Activated CD4-positive, alpha-beta T cell treated with anti-CD3 and anti-CD28 coated beads for 36 hours (primary cell): ENCODE measurements at regions of chr10 and their contacts with region 1.

Region 1: DNA sequence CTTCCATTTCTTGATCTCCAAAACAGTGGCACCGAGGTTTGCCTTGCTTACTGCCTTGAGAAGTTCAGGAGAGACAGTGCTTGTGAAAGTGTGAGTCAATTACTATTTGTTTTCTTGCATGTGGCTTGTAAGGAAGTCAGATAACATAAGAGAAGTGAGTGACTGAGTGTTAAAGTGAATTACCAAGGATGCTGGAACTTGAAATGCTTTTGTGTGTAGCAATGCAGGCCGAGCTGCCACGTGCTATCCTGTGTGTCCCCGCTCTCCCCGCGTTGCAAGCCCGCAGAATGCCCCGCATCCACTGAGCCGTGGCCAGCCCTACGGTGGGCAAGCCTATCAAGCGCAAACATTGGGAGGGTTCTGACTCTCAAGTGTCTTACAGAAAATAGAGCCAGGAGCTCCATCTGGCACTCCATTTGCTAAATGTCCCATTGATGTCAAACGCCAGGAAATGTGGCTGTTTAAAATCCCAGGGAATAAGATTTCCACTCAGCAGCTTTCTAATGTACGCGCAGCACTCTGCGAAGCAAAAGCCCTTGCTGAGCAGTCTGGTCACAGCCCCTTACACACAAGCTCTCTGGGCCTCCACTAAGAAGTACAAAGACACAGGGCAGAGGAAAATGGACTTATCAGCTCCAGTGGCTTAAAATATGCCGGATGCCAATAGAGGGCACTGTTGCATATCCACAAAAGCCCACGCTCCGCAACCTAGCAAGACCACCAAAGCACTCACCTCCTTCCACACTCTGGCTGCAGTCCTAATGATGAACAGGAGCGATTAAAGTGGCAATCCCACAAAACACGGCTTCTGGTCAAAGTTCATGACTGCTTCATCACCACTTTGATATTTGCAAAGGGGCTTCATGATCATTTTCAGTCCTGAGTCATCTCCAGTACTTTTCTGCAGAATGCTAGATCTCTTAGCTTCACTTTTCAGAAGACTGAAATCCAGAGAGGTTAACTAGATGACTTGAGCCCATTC is 158.0 kb upstream of the ITGB1 start:
- DNase-seq: no peak
- ATAC-seq: peak; percentile 30
- H3K4me3 Mint-ChIP-seq: no peak overlapping the region
- H3K27ac Mint-ChIP-seq: peak overlapping the region; percentile 62
- H3K4me1 Mint-ChIP-seq: peaks cover 86% of the 10 kb centered on the region
- H3K27me3 Mint-ChIP-seq: no peaks in the 10 kb centered on the region

Region 2: DNA sequence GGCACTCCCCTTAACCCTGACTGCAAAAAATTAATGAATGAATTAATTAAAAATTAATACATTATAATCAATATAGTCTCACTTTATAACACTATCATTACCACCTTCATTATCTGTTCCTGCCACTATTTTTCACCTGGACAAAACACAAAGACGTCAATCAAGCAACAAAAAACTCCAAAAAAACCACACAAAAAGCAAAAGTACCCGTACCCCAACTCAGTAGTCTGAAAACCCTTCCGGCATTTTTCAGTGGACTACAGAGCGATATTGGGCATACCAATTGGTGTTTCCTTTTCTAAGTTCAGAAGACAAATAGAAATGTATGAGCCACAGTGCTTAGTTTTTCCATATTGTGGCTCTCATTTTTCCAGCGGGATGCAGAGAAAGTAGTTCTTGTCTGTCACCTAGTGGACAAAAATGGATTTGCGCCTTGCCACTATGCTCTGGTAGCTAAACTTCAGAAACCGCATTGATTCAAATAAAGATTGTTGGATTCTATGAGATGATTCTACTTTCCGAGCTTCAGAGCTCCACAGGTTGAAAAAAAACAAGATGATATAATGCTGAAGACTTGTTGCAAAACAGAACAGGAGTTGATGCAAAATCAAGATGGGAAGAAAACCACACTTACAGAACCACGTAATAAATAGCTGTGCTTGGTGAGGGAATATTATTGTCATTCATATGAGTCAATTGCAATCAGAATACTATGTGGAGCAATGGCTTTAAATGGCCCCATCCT is 107.4 kb before region 1 on chr10:
- CTCF ChIA-PET with region 1: interaction called, 5 read pairs
- POLR2A ChIA-PET with region 1: interaction called, 3 read pairs
- intact Hi-C with region 1: loop called in 1 of 2 experiments (anchors 5 kb)
- DNase-seq: peak; percentile 80
- ATAC-seq: peak; percentile 61
- H3K4me3 Mint-ChIP-seq: peak overlapping the region; percentile 40
- H3K27ac Mint-ChIP-seq: peak overlapping the region; percentile 67
- H3K4me1 Mint-ChIP-seq: peaks cover 41% of the 10 kb centered on the region
- H3K27me3 Mint-ChIP-seq: peaks cover 7% of the 10 kb centered on the region

Region 3: GRCh38 chr10:33094263-33095051 is 21.6 kb before region 1 on chr10:
- CTCF ChIA-PET with region 1: no interaction called
- POLR2A ChIA-PET with region 1: no interaction called
- intact Hi-C with region 1: no loop called
- DNase-seq: peak; percentile 11
- ATAC-seq: peak; percentile 39
- H3K4me3 Mint-ChIP-seq: no peak overlapping the region
- H3K27ac Mint-ChIP-seq: peak overlapping the region; percentile 16
- H3K4me1 Mint-ChIP-seq: peaks cover 22% of the 10 kb centered on the region
- H3K27me3 Mint-ChIP-seq: no peaks in the 10 kb centered on the region

Region 4: DNA sequence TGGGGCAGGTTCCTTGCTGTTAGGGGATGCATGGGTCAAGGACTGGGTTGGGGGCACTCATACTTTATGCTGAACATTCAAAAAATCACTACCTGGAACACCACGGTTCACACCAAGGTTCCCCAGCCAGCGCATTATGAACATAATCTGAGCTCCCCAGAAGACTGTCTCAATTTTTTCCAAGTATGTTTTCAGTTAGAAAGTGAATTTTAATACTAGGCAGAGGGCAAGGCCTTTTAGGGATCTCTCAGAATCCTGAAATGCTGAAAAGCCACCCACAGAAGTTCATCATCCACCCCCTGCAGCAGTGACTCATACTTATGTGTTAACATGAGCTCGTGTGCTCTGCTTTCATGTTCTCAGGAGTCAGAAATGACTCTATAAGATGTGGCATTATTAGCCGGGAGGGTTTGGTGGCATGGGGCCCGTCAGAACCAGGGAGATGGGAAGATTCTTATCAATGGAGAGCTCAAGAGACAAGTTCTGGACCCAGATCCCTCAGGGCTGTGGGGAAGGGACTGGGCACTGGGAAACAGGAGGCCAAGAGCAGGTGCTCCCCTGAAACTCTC is 27.2 kb after region 1 on chr10:
- CTCF ChIA-PET with region 1: interaction called, 3 read pairs
- POLR2A ChIA-PET with region 1: interaction called, 10 read pairs
- intact Hi-C with region 1: loop called in 1 of 2 experiments (anchors 1 kb)
- DNase-seq: peak; percentile 76
- ATAC-seq: peak; percentile 86
- H3K4me3 Mint-ChIP-seq: no peak overlapping the region
- H3K27ac Mint-ChIP-seq: peak overlapping the region; percentile 75
- H3K4me1 Mint-ChIP-seq: peaks cover 56% of the 10 kb centered on the region
- H3K27me3 Mint-ChIP-seq: peaks cover 2% of the 10 kb centered on the region

Region 5: GRCh38 chr10:33248638-33249037 is 132.6 kb after region 1 on chr10:
- CTCF ChIA-PET with region 1: no interaction called
- POLR2A ChIA-PET with region 1: no interaction called
- intact Hi-C with region 1: loop called in 1 of 2 experiments (anchors 1 kb)
- DNase-seq: peak; percentile 30
- ATAC-seq: peak; percentile 83
- H3K4me3 Mint-ChIP-seq: no peak overlapping the region
- H3K27ac Mint-ChIP-seq: peak overlapping the region; percentile 39
- H3K4me1 Mint-ChIP-seq: peaks cover 71% of the 10 kb centered on the region
- H3K27me3 Mint-ChIP-seq: peaks cover 12% of the 10 kb centered on the region